ENCODE measurements at regions of chr14 and their contacts with region 1.

Region 1: GRCh38 chr14:52527049-52527448 is 25.3 kb downstream of the TXNDC16 start:
- DNase-seq: no peak
- H3K4me3 ChIP-seq: no peak overlapping the region
- H3K27ac ChIP-seq: no peak overlapping the region
- H3K4me1 ChIP-seq: no peaks in the 10 kb centered on the region
- H3K27me3 ChIP-seq: no peaks in the 10 kb centered on the region
- CTCF ChIP-seq: no peak
- POLR2A ChIP-seq: no peak

Region 2: GRCh38 chr14:50756300-50756699 is 1770.7 kb before region 1 on chr14:
- intact Hi-C with region 1: loop called (anchors 5 kb)
- DNase-seq: no peak
- H3K4me3 ChIP-seq: no peak overlapping the region
- H3K27ac ChIP-seq: no peak overlapping the region
- H3K4me1 ChIP-seq: no peaks in the 10 kb centered on the region
- H3K27me3 ChIP-seq: no peaks in the 10 kb centered on the region
- CTCF ChIP-seq: no peak
- POLR2A ChIP-seq: no peak